Mammary epithelial cell (primary cell): ENCODE measurements at regions of chr6 and their contacts with region 1.

Region 1: GRCh38 chr6:11653028-11653583 is 115.6 kb downstream of the TMEM170B start:
- DNase-seq: peak; percentile 60
- H3K4me3 ChIP-seq: no peak overlapping the region
- H3K27ac ChIP-seq: no peak overlapping the region
- H3K4me1 ChIP-seq: peaks cover 8% of the 10 kb centered on the region
- H3K27me3 ChIP-seq: no peaks in the 10 kb centered on the region
- CTCF ChIP-seq: no peak

Region 2: DNA sequence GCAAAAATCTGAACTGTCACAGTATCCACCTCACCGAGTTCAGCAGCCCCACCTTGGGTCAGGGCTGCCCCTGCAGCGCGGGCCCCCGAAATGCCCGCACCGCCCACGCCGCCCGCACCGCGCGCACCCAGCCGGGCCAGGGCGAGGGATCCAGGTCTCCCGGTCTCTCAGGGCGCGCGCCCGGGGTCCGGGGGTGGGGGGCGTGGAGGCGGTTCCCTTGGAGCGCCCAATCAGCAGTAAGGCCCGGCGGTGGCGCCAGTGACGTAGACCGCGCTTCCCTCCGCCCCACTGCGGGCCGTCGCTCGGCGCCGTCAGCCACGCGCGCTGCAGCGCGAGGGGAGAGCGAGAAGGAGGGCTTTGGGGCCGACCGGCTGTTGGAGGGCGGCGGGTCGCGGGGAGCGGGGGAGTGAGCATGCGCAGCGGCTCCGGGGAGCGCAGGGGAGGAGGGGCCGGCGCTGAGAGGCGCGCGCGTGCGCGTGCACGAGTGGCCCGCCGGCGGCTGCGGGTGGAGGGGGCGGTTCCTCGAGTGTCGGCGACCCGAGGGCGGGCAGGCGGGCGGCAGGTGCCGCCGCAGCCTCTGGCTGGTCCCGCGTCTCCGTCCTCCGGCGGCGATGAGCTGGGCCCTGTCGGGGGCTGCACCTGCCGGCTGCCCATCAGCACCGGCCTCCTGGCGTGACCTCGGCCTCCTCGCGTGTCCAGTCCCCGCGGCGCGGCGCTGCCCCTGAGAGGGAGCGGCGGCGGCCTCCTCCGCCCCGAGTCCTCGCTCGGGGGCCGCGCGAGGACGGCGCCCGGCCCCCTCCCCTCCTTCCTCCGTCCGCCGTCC is 115.7 kb before region 1 on chr6 and contains the start of gene TMEM170B:
- CTCF ChIA-PET with region 1: no interaction called
- dilution Hi-C with region 1: no loop called
- in situ Hi-C with region 1: no loop called
- intact Hi-C with region 1: no loop called
- DNase-seq: peak; percentile 62
- H3K4me3 ChIP-seq: peak within 1 kb of the TSS; percentile 62 to 67 (median 65)
- H3K27ac ChIP-seq: no peak within 1 kb of the TSS
- H3K4me1 ChIP-seq: peaks cover 15% of the 10 kb centered on the region
- H3K27me3 ChIP-seq: peaks cover 20% of the 10 kb centered on the region
- CTCF ChIP-seq: no peak
- total RNA-seq, gene TMEM170B: 0.12 to 0.83 TPM

Region 3: DNA sequence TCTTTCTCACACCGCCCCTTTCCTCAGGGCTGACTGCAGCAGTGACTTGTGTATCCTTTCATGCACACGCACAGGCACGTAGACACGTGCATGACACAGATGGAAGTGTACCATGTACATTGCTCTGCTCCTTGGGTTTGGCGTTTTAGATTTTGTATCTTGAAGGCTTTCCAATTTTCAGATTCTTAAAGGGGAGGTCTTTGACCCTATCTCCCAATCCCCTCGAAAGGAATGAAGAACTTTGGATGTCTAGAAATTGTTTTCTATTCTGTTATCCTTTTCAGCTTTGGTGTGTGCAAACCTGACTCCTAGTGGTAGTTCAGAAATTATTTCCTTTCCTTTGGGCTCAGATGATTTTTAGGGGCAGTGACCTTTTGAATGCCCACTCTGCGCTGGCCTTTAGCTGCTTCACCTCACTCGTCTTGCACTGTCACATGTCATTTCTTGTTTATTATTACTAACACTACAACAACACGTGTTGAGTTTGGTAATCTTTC is 422.0 kb after region 1 on chr6:
- CTCF ChIA-PET with region 1: no interaction called
- dilution Hi-C with region 1: no loop called
- in situ Hi-C with region 1: no loop called
- intact Hi-C with region 1: loop called (anchors 1 kb)
- DNase-seq: peak; percentile 45
- H3K4me3 ChIP-seq: no peak overlapping the region
- H3K27ac ChIP-seq: no peak overlapping the region
- H3K4me1 ChIP-seq: peaks cover 18% of the 10 kb centered on the region
- H3K27me3 ChIP-seq: no peaks in the 10 kb centered on the region
- CTCF ChIP-seq: peak; percentile 24 to 42

Region 4: GRCh38 chr6:12150812-12151432 is 497.8 kb after region 1 on chr6:
- CTCF ChIA-PET with region 1: no interaction called
- dilution Hi-C with region 1: no loop called
- in situ Hi-C with region 1: no loop called
- intact Hi-C with region 1: loop called (anchors 5 kb)
- DNase-seq: no peak
- H3K4me3 ChIP-seq: no peak overlapping the region
- H3K27ac ChIP-seq: no peak overlapping the region
- H3K4me1 ChIP-seq: peaks cover 13% of the 10 kb centered on the region
- H3K27me3 ChIP-seq: no peaks in the 10 kb centered on the region
- CTCF ChIP-seq: peak; percentile 56 to 81

Region 5: DNA sequence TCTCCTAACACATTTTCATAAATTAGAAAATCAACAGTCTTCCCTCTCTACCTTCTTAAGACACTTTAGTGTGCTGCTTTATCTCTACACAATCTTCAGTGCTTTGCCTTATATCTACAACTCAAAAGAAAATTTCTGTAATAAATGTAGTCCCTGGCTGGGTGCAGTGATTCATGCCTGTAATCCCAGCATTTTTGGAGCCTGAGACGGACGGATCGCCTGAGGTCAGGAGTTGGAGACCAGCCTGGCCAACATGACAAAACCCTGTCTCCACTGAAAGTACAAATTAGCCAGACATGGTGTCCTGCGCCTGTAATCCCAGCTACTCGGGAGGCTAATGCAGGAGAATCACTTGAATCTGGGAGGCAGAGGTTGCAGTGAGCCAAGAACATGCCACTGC is 627.4 kb after region 1 on chr6:
- CTCF ChIA-PET with region 1: no interaction called
- dilution Hi-C with region 1: no loop called
- in situ Hi-C with region 1: no loop called
- intact Hi-C with region 1: no loop called
- DNase-seq: peak; percentile 46
- H3K4me3 ChIP-seq: no peak overlapping the region
- H3K27ac ChIP-seq: no peak overlapping the region
- H3K4me1 ChIP-seq: no peaks in the 10 kb centered on the region
- H3K27me3 ChIP-seq: no peaks in the 10 kb centered on the region
- CTCF ChIP-seq: no peak

Region 6: GRCh38 chr6:12395898-12396297 is 742.8 kb after region 1 on chr6:
- CTCF ChIA-PET with region 1: no interaction called
- dilution Hi-C with region 1: no loop called
- in situ Hi-C with region 1: no loop called
- intact Hi-C with region 1: loop called (anchors 10 kb)
- DNase-seq: no peak
- H3K4me3 ChIP-seq: no peak overlapping the region
- H3K27ac ChIP-seq: no peak overlapping the region
- H3K4me1 ChIP-seq: no peaks in the 10 kb centered on the region
- H3K27me3 ChIP-seq: no peaks in the 10 kb centered on the region
- CTCF ChIP-seq: peak in 1 of 2 donors; percentile 43